OCI-LY7 (cell line): ENCODE measurements at regions of chr12 and their contacts with region 1.

Region 1: DNA sequence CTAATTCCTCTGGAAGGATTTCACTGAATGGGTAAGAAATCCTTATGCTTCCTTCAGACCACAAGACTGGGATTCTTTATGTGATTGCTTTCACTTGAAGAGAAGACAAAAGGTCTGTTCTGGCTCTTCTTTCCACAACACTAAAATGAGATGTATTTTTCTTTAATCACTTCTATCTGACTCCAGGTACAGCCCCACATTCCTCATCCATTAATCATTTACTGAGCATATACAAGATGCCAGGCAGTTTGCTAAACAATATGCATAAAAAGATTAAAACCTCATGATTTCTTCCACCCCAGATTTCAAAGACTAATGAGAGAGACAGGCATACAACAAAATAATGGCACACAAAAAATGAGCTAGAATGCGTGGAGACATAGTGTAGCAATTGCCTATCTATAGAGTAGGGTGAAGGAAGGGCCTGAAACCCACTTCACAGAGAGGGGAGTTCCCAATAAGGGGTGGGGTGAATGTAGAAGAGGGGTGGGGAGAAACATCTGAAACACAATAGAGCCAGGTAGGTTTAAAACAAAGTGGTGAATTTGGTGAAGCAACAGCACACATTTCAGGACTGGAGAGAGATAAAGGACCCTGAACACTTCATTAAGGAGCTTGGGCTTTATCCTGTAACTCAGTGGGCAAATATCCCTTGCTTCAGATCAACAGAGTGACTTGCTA is 65.1 kb upstream of the PRB2 start:
- DNase-seq: no peak
- H3K4me3 ChIP-seq: no peak overlapping the region
- H3K27ac ChIP-seq: no peak overlapping the region
- H3K4me1 ChIP-seq: no peaks in the 10 kb centered on the region
- CTCF ChIP-seq: no peak

Region 2: DNA sequence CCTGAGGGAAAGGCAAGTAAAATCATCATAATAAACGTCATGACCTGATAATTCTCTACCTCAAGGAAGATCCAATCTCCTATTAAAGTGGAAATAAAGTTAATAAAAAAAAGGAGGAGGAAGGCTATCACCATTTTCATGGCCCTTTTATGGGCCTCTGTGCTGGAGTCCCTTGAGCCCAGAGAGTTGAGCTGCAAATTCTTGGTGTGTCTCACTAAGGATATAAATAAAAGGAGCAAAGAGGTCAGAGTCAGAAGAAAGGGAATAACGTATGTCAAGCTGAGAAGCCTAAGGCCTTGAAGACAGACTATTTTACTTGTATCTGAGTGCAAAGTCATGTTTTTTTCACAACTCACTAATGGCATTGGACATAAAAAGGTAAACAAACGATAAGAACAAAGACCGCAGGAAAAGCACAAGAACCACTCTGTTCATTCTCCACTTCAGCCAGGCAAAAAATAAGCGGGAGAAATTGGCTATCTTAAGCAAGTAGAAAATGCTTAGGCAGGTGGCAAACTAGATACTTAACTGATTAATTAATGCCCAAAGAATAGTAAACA is 301.5 kb before region 1 on chr12:
- CTCF ChIA-PET with region 1: no interaction called
- POLR2A ChIA-PET with region 1: interaction called, 13 read pairs
- intact Hi-C with region 1: no loop called
- DNase-seq: no peak
- H3K4me3 ChIP-seq: no peak overlapping the region
- H3K27ac ChIP-seq: no peak overlapping the region
- H3K4me1 ChIP-seq: no peaks in the 10 kb centered on the region
- CTCF ChIP-seq: no peak

Region 3: DNA sequence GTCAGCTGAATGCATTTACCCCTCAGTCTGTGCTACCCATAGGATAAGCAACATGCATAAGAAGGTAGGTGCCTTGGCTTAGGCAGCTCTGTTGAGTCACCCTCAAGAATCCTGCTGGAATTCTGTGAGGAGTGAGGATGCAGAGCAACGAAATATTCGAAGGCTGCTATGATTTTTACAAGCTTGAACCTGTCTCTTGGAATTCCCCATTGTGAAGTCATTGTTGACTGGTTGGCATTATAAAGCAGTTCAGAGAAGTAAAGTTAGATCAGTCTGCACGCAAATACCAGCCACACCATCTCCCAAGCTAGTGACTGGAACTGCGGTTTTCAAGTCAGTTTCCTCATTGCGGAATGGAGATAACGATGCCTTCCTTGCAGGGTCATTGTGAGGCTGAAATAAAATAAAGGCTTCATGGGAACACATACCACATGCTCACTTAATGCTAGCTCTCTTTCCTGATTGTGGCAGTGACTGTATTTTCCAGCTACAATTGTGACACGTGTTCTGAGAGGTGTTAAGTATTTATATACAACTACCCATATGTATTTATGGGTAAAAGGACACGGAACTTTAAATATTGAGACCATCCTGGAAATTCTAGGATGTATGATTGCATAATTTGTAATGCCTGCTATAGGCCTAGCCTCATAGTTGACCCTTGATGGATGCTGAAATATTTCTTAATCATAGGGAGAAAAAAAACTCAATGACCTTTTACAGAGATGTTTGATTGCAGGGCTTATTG is 285.7 kb after region 1 on chr12:
- CTCF ChIA-PET with region 1: no interaction called
- POLR2A ChIA-PET with region 1: no interaction called
- intact Hi-C with region 1: no loop called
- DNase-seq: peak; percentile 51
- H3K4me3 ChIP-seq: no peak overlapping the region
- H3K27ac ChIP-seq: peak overlapping the region; percentile 100
- H3K4me1 ChIP-seq: peaks cover 100% of the 10 kb centered on the region
- CTCF ChIP-seq: no peak